ENCODE measurements at regions of chr9 and their contacts with region 1.

Region 1: DNA sequence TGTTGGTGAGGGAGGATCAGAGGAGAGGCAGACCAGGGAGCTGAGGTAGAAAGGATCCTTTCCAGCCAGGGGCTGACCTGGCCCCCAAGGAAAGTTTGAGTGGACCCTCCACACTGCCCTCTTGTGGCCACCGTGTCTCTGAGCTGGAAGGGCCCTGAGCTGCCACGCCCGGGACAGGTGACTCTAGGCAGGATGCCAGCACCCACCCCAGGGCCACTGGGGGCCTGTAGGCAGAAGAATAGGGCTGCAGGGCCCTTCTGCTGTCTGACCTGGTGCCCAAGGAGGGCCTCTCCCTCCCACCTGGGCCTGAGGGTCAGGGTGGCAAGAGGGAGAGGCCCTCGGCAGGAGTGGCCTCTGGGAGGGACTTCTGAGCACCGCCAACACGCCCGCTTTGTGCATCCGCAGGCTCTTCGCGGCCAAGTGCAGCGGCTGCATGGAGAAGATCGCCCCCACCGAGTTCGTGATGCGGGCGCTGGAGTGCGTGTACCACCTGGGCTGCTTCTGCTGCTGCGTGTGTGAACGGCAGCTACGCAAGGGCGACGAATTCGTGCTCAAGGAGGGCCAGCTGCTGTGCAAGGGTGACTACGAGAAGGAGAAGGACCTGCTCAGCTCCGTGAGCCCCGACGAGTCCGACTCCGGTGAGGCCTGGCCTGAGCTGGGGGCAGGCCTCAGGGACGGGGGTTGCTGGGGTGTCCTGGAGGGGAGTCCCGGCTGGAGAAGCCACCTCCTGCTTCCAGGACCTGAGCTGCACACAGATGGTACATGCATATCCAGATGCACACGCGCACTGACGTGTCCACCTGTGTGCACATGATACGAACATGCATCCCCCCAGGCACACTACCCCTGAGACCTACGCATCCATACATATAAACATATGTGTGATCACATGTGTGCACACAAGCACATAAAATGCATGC is 77.0 kb downstream of the LMX1B start:
- DNase-seq: peak; percentile 68
- H3K4me3 Mint-ChIP-seq: no peak overlapping the region
- H3K27ac Mint-ChIP-seq: no peak overlapping the region
- H3K4me1 Mint-ChIP-seq: no peaks in the 10 kb centered on the region
- H3K27me3 Mint-ChIP-seq: peaks cover 29% of the 10 kb centered on the region

Region 2: DNA sequence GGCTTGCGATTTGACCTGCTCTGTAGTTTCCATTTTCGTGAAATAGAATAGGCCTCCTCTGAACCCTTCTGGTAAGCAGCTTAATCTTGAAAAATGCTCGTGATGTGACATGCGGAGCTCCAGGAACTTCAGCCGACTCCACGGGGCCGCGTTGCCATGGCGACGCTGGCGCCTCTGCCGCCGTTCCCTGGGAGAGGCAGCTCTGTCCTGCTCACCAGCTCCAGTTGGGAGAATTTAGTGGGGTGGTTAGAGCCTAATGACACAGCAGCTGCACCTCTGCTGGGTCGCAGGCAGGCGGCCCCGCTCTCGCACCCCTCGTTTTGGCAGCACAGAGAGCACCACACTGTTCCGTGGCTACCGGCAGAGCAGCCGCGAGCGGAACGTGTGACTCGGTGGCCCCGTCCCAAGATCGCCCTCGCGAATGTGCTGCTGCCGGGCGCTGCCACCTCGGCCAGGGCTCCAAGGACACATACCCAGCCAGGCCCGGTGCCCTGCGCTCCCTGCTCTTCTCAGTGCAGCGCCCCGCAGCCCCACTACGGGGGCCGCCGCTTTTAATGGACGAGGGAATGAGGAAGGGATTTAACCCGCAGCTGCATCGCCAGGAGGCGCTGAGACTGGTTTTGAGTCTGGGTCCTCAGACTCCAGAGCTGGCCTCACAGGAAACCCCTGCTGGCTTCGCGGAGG is 208.2 kb before region 1 on chr9:
- CTCF ChIA-PET with region 1: no interaction called
- POLR2A ChIA-PET with region 1: no interaction called
- intact Hi-C with region 1: no loop called
- DNase-seq: no peak
- H3K4me3 Mint-ChIP-seq: no peak overlapping the region
- H3K27ac Mint-ChIP-seq: no peak overlapping the region
- H3K4me1 Mint-ChIP-seq: peaks cover 9% of the 10 kb centered on the region
- H3K27me3 Mint-ChIP-seq: no peaks in the 10 kb centered on the region

Region 3: GRCh38 chr9:126667190-126668055 is 23.3 kb before region 1 on chr9:
- CTCF ChIA-PET with region 1: interaction called, 15 read pairs
- POLR2A ChIA-PET with region 1: no interaction called
- intact Hi-C with region 1: no loop called
- DNase-seq: no peak
- H3K4me3 Mint-ChIP-seq: no peak overlapping the region
- H3K27ac Mint-ChIP-seq: no peak overlapping the region
- H3K4me1 Mint-ChIP-seq: no peaks in the 10 kb centered on the region
- H3K27me3 Mint-ChIP-seq: peaks cover 33% of the 10 kb centered on the region

Region 4: DNA sequence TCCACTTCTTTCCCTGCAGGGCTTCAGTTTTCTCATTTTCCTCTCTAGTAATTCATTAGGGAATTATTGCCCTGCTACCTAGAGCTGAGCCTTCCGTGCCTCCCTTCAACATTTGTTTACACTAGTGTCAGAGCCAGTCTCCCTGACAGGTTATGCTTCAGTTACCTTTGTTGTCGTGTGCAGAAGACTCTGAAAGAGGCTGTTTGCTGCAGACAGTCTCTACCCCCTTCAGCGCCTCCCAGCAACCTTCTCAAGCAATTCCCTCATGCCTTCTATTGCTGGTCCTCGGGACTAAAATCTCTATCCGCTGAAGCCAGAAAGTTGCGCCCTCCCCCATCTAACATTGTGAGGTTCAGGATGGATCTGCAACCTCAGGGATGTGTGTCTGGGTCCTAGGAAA is 236.7 kb after region 1 on chr9:
- CTCF ChIA-PET with region 1: no interaction called
- POLR2A ChIA-PET with region 1: no interaction called
- intact Hi-C with region 1: no loop called
- DNase-seq: no peak
- H3K4me3 Mint-ChIP-seq: no peak overlapping the region
- H3K27ac Mint-ChIP-seq: no peak overlapping the region
- H3K4me1 Mint-ChIP-seq: no peaks in the 10 kb centered on the region
- H3K27me3 Mint-ChIP-seq: no peaks in the 10 kb centered on the region

Measured in activated CD4-positive, alpha-beta memory T cell treated with anti-CD3 and anti-CD28 coated beads for 36 hours (primary cell).